ENCODE measurements at regions of chr22 and their contacts with region 1.

Region 1: GRCh38 chr22:17785185-17786184 is 11.2 kb upstream of the BID start:
- DNase-seq: no peak
- H3K4me3 ChIP-seq: no peak overlapping the region
- H3K27ac ChIP-seq: peak overlapping the region; percentile 52 to 75 (median 70)
- H3K4me1 ChIP-seq: peaks cover 31 to 51% (median 45%) of the 10 kb centered on the region in 4 donors
- H3K27me3 ChIP-seq: peaks cover 0 to 15% (median 0%) of the 10 kb centered on the region in 4 donors
- CTCF ChIP-seq: peak; percentile 67 to 78 (median 71)
- EP300 ChIP-seq: no peak
- POLR2A ChIP-seq: no peak

Region 2: DNA sequence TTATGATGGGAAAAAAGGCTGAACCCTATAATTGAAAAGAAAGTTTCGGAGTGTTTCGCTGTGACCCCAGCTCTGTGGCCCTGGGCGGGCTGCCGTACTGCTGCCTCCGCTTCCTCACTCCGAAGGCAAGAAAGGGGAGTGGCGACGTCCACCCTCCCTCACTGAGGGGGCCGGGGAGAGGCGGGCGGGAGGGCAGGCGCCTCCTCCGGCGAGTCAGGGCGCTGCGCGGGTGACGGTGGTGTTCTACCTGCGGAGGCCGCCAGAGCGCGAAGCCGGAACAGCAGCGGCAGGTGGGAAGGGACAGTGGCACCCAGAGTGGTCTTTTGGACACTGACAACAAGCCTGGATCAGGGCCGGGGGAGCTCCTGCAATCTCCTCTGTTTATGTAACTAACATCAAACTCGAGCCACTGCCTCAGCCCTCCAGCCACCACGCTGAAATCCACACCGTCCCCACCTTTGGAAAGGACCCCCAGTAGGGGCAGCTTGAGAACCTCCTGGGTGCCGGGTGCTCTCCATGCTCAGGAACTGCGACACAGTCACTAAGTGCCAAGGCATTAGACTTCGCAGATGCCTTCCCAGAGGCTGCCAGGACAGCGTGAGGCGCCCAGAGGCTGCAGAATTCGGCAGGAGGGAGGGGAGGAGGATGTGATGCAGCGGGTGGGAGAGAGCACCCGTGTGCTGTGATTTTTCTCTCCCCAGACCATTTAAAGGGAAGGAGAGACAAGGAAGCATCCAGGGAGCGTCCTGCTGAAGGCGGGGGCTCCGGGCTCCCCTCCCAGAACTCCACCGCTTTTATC is 36.7 kb before region 1 on chr22:
- intact Hi-C with region 1: loop called (anchors 5 kb)
- DNase-seq: no peak
- H3K4me3 ChIP-seq: peak overlapping the region; percentile 19 to 33 (median 28)
- H3K27ac ChIP-seq: no peak overlapping the region
- H3K4me1 ChIP-seq: peaks cover 0 to 7% (median 5%) of the 10 kb centered on the region in 4 donors
- H3K27me3 ChIP-seq: no peaks in the 10 kb centered on the region
- CTCF ChIP-seq: peak; percentile 17 to 52 (median 42)
- EP300 ChIP-seq: no peak
- POLR2A ChIP-seq: no peak

Measured in esophagus muscularis mucosa (tissue), 4 donors.